ENCODE measurements at regions of chr19 and their contacts with region 1.

Region 1: GRCh38 chr19:35931161-35931873 is 4.9 kb upstream of the LRFN3 start:
- DNase-seq: peak; percentile 100
- H3K4me3 Mint-ChIP-seq: peak overlapping the region; percentile 70
- H3K27ac Mint-ChIP-seq: peak overlapping the region; percentile 76
- H3K4me1 Mint-ChIP-seq: peaks cover 24% of the 10 kb centered on the region
- H3K27me3 Mint-ChIP-seq: no peaks in the 10 kb centered on the region

Region 2: DNA sequence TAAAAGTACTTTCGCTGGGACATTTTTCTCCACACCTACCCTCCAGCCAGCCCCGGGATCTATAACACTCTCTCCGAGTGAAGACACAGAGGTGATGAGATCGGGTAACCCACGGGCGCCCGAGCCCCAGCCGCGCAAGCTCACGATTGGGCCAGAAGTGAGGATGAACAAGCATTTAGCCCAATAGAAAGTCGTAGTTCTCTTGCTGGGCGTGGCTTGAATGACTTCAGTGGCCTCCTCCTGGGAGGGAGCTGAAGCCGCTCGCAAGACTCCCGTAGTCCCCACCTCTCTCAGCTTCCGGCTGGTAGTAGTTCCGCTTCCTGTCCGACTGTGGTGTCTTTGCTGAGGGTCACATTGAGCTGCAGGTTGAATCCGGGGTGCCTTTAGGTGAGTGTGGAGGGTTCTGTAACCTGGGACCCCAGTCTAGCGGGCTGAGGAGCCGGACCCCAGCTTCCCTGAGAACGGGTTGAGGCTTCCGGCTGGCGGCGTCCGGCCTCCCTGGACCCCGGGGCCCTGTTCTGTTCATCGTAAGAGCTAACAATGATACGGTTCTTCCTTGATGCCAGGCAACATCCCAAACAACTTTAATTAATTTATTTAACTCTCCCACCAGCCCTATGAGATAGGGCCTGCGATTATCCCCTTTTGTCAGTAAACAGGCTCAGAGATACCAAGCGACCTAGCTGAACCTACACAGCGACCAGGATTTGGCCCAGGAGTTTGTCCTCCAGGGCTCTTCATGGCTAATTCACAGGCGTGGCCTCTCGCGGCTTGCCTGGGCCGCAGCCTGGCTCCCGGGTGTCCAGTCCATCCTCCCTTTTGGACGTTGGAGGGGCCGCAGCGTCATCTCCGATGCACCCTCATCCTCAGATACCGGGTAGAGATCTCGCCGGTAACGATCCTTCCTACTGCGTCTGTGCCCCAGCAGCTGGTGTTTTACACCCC is 283.0 kb before region 1 on chr19 and contains the start of gene COX6B1:
- intact Hi-C with region 1: loop called (anchors 5 kb)
- DNase-seq: peak; percentile 93
- H3K4me3 Mint-ChIP-seq: peak within 1 kb of the TSS; percentile 96
- H3K27ac Mint-ChIP-seq: peak within 1 kb of the TSS; percentile 71
- H3K4me1 Mint-ChIP-seq: peaks cover 17% of the 10 kb centered on the region
- H3K27me3 Mint-ChIP-seq: no peaks in the 10 kb centered on the region
- total RNA-seq, gene COX6B1: 431 and 461 TPM in 2 replicates

Region 3: GRCh38 chr19:35693830-35694599 is 237.3 kb before region 1 on chr19:
- intact Hi-C with region 1: loop called (anchors 1 kb)
- DNase-seq: peak; percentile 85
- H3K4me3 Mint-ChIP-seq: no peak overlapping the region
- H3K27ac Mint-ChIP-seq: peak overlapping the region; percentile 35
- H3K4me1 Mint-ChIP-seq: peaks cover 13% of the 10 kb centered on the region
- H3K27me3 Mint-ChIP-seq: no peaks in the 10 kb centered on the region

Region 4: GRCh38 chr19:35748106-35749020 is 183.0 kb before region 1 on chr19 and contains the start of gene LIN37:
- intact Hi-C with region 1: loop called (anchors 1 kb)
- DNase-seq: peak; percentile 98
- H3K4me3 Mint-ChIP-seq: peak within 1 kb of the TSS; percentile 95
- H3K27ac Mint-ChIP-seq: peak within 1 kb of the TSS; percentile 90
- H3K4me1 Mint-ChIP-seq: peaks cover 31% of the 10 kb centered on the region
- H3K27me3 Mint-ChIP-seq: no peaks in the 10 kb centered on the region
- total RNA-seq, gene LIN37: 9.9 and 10.0 TPM in 2 replicates

Region 5: DNA sequence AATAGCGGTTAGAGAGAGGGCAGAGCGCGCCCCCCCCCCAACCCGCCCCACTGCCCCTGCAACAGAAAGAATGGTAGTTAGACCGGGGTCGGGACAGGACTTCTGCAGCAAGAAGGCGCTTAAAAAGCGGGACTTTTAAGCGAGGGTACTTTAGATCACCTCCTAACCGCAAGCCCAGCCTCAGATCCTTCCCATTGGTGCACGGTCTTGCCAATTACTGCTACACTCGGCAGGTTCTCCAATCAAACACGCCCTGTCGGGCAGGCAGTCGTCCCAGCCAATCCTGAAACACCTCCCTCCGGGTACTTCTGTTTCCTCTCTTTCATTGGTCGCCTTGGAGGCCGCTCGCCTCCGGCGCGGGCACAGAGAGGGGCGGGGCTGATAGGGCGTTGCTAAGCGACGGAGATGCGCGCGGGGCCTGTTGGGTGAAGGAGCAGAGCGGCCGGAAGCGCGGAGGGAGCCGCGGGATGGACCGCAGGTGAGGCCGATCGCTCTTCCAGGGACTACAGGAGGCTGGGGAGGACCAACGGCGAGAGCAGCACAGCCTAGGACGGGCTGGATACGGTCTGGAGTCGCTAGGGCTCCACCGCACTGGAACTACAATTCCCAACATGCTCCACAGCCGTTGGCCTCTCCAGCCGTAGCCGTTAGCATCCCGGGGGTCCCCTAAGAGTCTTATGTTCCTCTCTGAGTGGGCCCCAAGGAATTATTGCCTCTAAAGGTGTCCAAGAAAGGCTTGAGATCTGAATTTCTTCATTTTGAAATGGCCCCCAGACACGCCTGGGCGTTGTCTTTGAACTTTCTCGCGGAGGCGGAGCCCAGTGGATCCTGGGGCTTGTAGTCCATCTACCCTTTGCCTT is 173.3 kb before region 1 on chr19 and contains the start of gene PROSER3:
- intact Hi-C with region 1: loop called (anchors 1 kb)
- DNase-seq: peak; percentile 100
- H3K4me3 Mint-ChIP-seq: peak within 1 kb of the TSS; percentile 83
- H3K27ac Mint-ChIP-seq: peak within 1 kb of the TSS; percentile 85
- H3K4me1 Mint-ChIP-seq: peaks cover 21% of the 10 kb centered on the region
- H3K27me3 Mint-ChIP-seq: no peaks in the 10 kb centered on the region
- total RNA-seq, gene PROSER3: 40.1 and 41.2 TPM in 2 replicates

Region 6: GRCh38 chr19:35882114-35882832 is 49.0 kb before region 1 on chr19:
- intact Hi-C with region 1: loop called (anchors 1 kb)
- DNase-seq: no peak
- H3K4me3 Mint-ChIP-seq: no peak overlapping the region
- H3K27ac Mint-ChIP-seq: no peak overlapping the region
- H3K4me1 Mint-ChIP-seq: peaks cover 5% of the 10 kb centered on the region
- H3K27me3 Mint-ChIP-seq: peaks cover 7% of the 10 kb centered on the region

Region 7: GRCh38 chr19:35899547-35900214 is 31.6 kb before region 1 on chr19:
- intact Hi-C with region 1: loop called (anchors 1 kb)
- DNase-seq: peak; percentile 82
- H3K4me3 Mint-ChIP-seq: peak overlapping the region; percentile 92
- H3K27ac Mint-ChIP-seq: peak overlapping the region; percentile 96
- H3K4me1 Mint-ChIP-seq: peaks cover 43% of the 10 kb centered on the region
- H3K27me3 Mint-ChIP-seq: no peaks in the 10 kb centered on the region

Measured in activated T-helper 2 cell treated with anti-CD3 and anti-CD28 coated beads, Interferon-gamma antibody, Interleukin-2, Interleukin-4, amounts not matched to agents 10 μg/mL and 5 μg/mL and 100 μg/mL, durations not matched to agents 14 hours and 24 hours and 36 hours (primary cell).